Left colon (tissue), 2 donors: ENCODE measurements at regions of chr17 and their contacts with region 1.

Region 1: GRCh38 chr17:43483674-43484372 is at the start of gene DHX8:
- DNase-seq: peak; percentile 96 to 99
- ATAC-seq: peak; percentile 95
- total RNA-seq, gene DHX8: 42.5 to 49.8 TPM

Region 2: DNA sequence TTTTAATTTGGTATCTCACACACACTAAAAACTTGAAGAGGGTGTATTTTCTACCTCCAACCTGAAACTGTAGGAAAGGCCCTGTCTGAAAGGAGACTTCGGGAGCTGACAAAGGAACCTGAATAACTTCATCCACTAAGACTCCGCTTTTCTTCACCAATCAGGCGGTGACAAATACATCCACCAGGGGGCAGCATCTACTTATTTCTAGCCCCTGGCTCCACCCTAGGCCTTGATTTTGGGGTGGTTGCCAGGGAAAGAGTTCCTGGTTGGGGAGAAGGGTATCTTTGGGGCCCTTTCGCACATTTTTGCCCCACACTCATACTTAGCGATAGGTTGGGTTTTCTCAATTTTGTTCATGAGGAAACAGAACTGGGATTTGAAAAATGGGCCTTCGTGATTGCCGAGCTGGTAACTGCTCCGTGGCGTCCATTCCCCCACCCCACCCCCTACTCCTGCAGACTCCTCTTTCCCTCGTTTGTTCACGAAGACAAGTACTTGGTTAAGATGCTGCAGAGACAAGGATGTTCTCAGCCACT is 89.8 kb before region 1 on chr17:
- intact Hi-C with region 1: loop called (anchors 2 to 5 kb)
- DNase-seq: peak; percentile 84 to 94
- ATAC-seq: peak; percentile 37

Region 3: GRCh38 chr17:43713494-43714162 is 229.8 kb after region 1 on chr17:
- intact Hi-C with region 1: no loop called
- DNase-seq: peak in 1 of 2 donors; percentile 26
- ATAC-seq: peak; percentile 54

Region 4: GRCh38 chr17:43958953-43959352 is 475.1 kb after region 1 on chr17:
- intact Hi-C with region 1: no loop called
- DNase-seq: no peak
- ATAC-seq: no peak